ENCODE measurements at regions of chr11 and their contacts with region 1.

Region 1: DNA sequence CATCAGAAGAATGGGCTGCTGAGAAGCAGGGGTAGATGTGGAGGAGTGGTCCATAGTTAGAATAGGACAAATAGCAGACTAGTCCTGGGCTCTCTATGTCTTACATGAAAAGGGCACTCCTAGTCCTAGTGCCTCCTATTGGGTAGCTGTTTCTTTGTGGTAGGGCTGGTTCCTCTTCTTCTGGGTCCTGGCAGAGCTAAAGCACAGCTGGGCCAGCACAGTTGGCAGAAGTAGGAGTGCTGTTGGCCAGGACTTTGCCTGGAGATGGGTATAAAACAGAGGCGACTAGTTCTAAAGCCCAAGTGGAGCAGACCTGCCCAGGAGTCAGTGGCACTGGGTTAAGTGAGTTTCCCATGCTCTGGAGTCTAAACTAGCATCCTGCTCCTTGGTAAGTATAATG is 55.2 kb downstream of the PPFIBP2 start:
- DNase-seq: peak in 1 of 2 donors; percentile 68
- H3K4me3 ChIP-seq: no peak overlapping the region
- H3K27ac ChIP-seq: no peak overlapping the region
- H3K4me1 ChIP-seq: peaks cover 23 to 32% (median 25%) of the 10 kb centered on the region in 4 donors
- H3K27me3 ChIP-seq: no peaks in the 10 kb centered on the region
- CTCF ChIP-seq: no peak
- EP300 ChIP-seq: no peak
- POLR2A ChIP-seq: no peak

Region 2: GRCh38 chr11:7307836-7308235 is 261.2 kb before region 1 on chr11:
- intact Hi-C with region 1: no loop called
- DNase-seq: no peak
- H3K4me3 ChIP-seq: no peak overlapping the region
- H3K27ac ChIP-seq: no peak overlapping the region
- H3K4me1 ChIP-seq: no peaks in the 10 kb centered on the region
- H3K27me3 ChIP-seq: no peaks in the 10 kb centered on the region
- CTCF ChIP-seq: no peak
- EP300 ChIP-seq: no peak
- POLR2A ChIP-seq: no peak

Region 3: GRCh38 chr11:7665473-7666291 is 96.6 kb after region 1 on chr11:
- intact Hi-C with region 1: loop called (anchors 5 kb)
- DNase-seq: peak; percentile 92 to 93
- H3K4me3 ChIP-seq: no peak overlapping the region
- H3K27ac ChIP-seq: peak overlapping the region in 4 of 5 donors; percentile 16 to 60 (median 34)
- H3K4me1 ChIP-seq: peaks cover 0 to 9% (median 8%) of the 10 kb centered on the region in 4 donors
- H3K27me3 ChIP-seq: no peaks in the 10 kb centered on the region
- CTCF ChIP-seq: peak in 6 of 7 experiments; percentile 52 to 97 (median 89)
- EP300 ChIP-seq: no peak
- POLR2A ChIP-seq: no peak

Measured in stomach (tissue), 19 donors.